ENCODE measurements at regions of chr10 and their contacts with region 1.

Region 1: DNA sequence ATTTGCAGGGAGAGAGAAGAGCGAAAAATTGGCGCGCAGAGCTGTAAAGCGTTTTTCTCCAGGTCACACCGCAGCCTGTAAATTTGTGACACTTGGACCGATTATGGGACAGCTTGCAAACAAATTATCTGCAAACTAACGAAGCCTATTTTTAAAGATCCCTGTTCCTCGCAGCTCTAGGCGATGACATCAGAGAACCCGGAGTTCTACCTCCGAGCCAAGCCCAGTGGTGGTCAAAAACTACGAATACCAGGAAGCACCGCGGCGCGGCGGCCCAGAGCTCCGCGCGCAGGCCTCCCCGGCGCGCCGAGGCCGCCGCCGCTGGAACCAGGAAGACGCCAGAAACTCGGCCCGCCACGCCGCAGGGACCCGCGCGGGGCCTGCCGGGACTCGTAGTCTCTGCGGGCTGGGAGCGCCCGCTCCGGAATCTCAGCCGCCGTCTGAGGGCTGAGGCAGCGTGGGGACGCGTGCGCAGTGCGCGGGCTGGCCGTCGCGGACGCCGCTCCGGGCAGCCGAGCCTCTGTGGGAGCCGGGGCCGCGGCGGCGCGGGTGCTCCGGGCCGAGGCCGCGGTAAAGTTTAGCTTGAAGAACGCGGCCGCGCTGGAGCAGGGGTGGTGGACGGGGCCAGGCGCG is at the start of gene PLEKHA1:
- DNase-seq: peak; percentile 92 to 94 (median 93)
- H3K4me3 ChIP-seq: peak within 1 kb of the TSS; percentile 64 to 89
- H3K4me3 Mint-ChIP-seq: peak within 1 kb of the TSS; percentile 89 to 97 (median 96)
- H3K27ac ChIP-seq: peak within 1 kb of the TSS; percentile 94
- H3K27ac Mint-ChIP-seq: peak within 1 kb of the TSS; percentile 89 to 98 (median 96)
- H3K4me1 ChIP-seq: peaks cover 39% of the 10 kb centered on the region
- H3K4me1 Mint-ChIP-seq: peaks cover 23 to 51% (median 35%) of the 10 kb centered on the region in 4 donors
- H3K27me3 ChIP-seq: peaks cover 4% of the 10 kb centered on the region
- H3K27me3 Mint-ChIP-seq: peaks cover 7 to 11% of the 10 kb centered on the region in 2 donors
- total RNA-seq, gene PLEKHA1: 62.9 to 69.7 TPM

Region 2: DNA sequence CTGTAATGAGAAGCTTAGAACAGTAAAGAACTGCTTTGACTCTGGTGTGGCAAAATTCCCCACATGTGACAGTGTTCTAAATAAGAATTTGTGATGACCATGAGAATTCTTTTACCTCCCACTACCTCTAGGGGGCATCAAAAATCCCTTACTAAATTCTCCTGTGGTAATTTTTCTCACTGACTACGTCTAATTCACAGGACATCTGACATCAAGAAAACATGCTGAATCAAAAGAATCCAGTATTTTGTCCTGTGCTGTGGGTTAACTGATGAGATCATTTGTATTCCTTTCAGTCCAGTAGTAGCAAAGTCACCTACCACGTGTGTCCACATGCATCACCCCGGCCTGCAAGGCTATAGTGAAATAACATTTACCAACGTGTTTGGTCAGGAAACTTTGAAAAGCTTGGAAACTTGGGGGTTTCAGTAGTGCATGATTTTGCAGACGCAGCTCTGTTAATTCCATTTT is 550.3 kb before region 1 on chr10:
- CTCF ChIA-PET with region 1: no interaction called
- POLR2A ChIA-PET with region 1: no interaction called
- intact Hi-C with region 1: no loop called
- DNase-seq: peak in 3 of 5 donors; percentile 8 to 15 (median 10)
- H3K4me3 ChIP-seq: no peak overlapping the region
- H3K4me3 Mint-ChIP-seq: no peak overlapping the region
- H3K27ac ChIP-seq: no peak overlapping the region
- H3K27ac Mint-ChIP-seq: no peak overlapping the region
- H3K4me1 ChIP-seq: no peaks in the 10 kb centered on the region
- H3K4me1 Mint-ChIP-seq: peaks cover 0 to 5% (median 1%) of the 10 kb centered on the region in 4 donors
- H3K27me3 ChIP-seq: no peaks in the 10 kb centered on the region
- H3K27me3 Mint-ChIP-seq: no peaks in the 10 kb centered on the region

Region 3: GRCh38 chr10:122342293-122343134 is 31.8 kb before region 1 on chr10:
- CTCF ChIA-PET with region 1: interaction called, 19 read pairs
- POLR2A ChIA-PET with region 1: no interaction called
- intact Hi-C with region 1: no loop called
- DNase-seq: peak; percentile 58 to 68 (median 65)
- H3K4me3 ChIP-seq: no peak overlapping the region
- H3K4me3 Mint-ChIP-seq: no peak overlapping the region
- H3K27ac ChIP-seq: no peak overlapping the region
- H3K27ac Mint-ChIP-seq: peak overlapping the region in 2 of 7 donors; percentile 50 to 75
- H3K4me1 ChIP-seq: no peaks in the 10 kb centered on the region
- H3K4me1 Mint-ChIP-seq: peaks cover 3 to 9% (median 6%) of the 10 kb centered on the region in 4 donors
- H3K27me3 ChIP-seq: no peaks in the 10 kb centered on the region
- H3K27me3 Mint-ChIP-seq: peaks cover 0 to 1% of the 10 kb centered on the region in 2 donors

Region 4: DNA sequence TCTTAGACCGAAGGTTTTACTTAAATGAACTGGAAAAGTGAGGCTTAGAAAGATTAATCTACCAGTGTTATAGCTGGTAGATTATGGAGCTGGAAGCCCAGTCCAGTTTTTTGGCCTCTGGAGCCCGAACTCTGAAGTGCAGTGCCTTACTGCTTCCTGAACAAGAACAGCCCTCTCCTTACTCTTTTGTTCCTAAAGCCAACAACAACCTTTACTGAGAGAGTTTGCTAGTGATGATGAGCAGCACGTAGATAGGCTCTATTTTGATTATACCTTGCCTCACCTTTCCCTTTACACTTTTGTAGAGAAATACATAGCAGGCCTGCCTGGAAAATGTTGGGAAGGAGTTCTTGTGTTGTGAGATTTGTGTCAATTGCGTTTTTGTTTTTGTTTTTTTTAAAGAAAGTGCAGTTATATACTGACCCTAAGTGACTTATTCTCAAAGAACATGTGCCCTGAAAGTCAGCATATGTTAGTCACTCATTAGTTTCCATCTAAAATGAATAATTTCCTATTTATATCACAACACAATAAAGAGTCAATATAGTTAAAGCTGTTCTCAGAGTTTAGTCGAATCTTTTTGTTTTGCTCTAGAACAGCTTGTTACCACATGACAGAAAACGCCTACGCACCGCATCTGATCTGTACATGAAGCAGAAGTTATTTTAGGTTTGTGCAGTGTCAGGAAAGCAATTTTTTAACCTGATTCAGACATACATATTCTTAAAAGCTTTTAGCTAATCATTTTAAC is 33.2 kb after region 1 on chr10:
- CTCF ChIA-PET with region 1: interaction called, 3 read pairs
- POLR2A ChIA-PET with region 1: interaction called, 12 read pairs
- intact Hi-C with region 1: loop called (anchors 1 kb)
- DNase-seq: peak; percentile 25 to 79 (median 46)
- H3K4me3 ChIP-seq: no peak overlapping the region
- H3K4me3 Mint-ChIP-seq: peak overlapping the region; percentile 43 to 74 (median 60)
- H3K27ac ChIP-seq: no peak overlapping the region
- H3K27ac Mint-ChIP-seq: peak overlapping the region; percentile 84 to 96 (median 86)
- H3K4me1 ChIP-seq: peaks cover 52% of the 10 kb centered on the region
- H3K4me1 Mint-ChIP-seq: peaks cover 25 to 50% (median 40%) of the 10 kb centered on the region in 4 donors
- H3K27me3 ChIP-seq: no peaks in the 10 kb centered on the region
- H3K27me3 Mint-ChIP-seq: no peaks in the 10 kb centered on the region

Region 5: GRCh38 chr10:122435212-122435827 is 61.0 kb after region 1 on chr10:
- CTCF ChIA-PET with region 1: interaction called, 31 read pairs
- POLR2A ChIA-PET with region 1: interaction called, 10 read pairs
- intact Hi-C with region 1: loop called (anchors 1 kb)
- DNase-seq: peak in 4 of 5 donors; percentile 54 to 62 (median 60)
- H3K4me3 ChIP-seq: no peak overlapping the region
- H3K4me3 Mint-ChIP-seq: no peak overlapping the region
- H3K27ac ChIP-seq: no peak overlapping the region
- H3K27ac Mint-ChIP-seq: no peak overlapping the region
- H3K4me1 ChIP-seq: no peaks in the 10 kb centered on the region
- H3K4me1 Mint-ChIP-seq: peaks cover 0 to 6% (median under 1%) of the 10 kb centered on the region in 4 donors
- H3K27me3 ChIP-seq: no peaks in the 10 kb centered on the region
- H3K27me3 Mint-ChIP-seq: no peaks in the 10 kb centered on the region

Region 6: GRCh38 chr10:122953827-122954730 is 579.7 kb after region 1 on chr10 and contains the start of gene C10orf88:
- CTCF ChIA-PET with region 1: no interaction called
- POLR2A ChIA-PET with region 1: interaction called, 8 read pairs
- intact Hi-C with region 1: loop called (anchors 10 kb)
- DNase-seq: peak; percentile 95 to 98 (median 98)
- H3K4me3 ChIP-seq: peak within 1 kb of the TSS; percentile 47 to 73
- H3K4me3 Mint-ChIP-seq: peak within 1 kb of the TSS; percentile 90 to 97 (median 92)
- H3K27ac ChIP-seq: peak within 1 kb of the TSS; percentile 57
- H3K27ac Mint-ChIP-seq: peak within 1 kb of the TSS; percentile 87 to 98 (median 93)
- H3K4me1 ChIP-seq: peaks cover 27% of the 10 kb centered on the region
- H3K4me1 Mint-ChIP-seq: peaks cover 17 to 43% (median 33%) of the 10 kb centered on the region in 4 donors
- H3K27me3 ChIP-seq: no peaks in the 10 kb centered on the region
- H3K27me3 Mint-ChIP-seq: peaks cover 0 to 2% of the 10 kb centered on the region in 2 donors
- total RNA-seq, gene C10orf88: 10.5 to 12.3 TPM

Region 7: DNA sequence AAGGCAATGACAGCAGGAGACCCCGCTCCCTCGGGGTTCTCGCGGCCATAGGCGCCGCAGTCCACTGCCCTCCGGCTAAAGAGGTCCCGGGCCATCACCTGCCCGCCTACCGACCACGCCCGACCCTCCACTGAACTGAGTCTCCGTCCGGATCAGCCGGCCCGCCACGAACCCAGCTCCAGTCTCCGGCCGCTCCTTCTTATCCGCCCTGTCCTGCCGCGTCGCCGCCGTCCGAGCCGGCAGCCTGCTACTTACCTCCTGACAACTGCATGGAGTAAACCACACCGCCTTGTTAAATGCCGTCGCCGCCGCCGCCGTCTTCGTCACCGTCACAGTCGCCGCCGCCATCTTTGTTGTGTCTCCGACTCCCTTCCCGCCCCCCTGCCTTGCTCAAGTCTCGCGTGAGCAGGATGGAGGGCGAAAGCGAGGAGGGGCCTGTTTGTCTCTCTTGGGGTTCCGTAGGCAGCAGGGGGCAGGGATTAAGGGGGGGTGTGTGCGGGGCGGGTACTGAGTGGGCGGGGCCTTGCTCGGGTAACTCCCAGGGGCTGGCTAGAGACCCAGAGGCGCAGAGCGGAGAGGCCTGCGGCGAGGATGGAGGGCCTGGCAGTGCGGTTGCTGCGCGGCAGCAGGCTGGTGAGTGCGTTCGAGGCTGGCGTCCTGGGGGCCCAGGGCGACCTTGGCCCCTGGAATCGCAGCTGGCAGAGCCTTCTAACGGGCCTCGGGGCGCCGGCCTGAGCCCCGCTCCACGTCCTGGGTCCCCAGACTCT is 634.3 kb after region 1 on chr10 and contains the starts of genes ACADSB and IKZF5:
- CTCF ChIA-PET with region 1: no interaction called
- POLR2A ChIA-PET with region 1: interaction called, 3 read pairs
- intact Hi-C with region 1: loop called (anchors 1 kb)
- DNase-seq: peak; percentile 95 to 99 (median 97)
- H3K4me3 ChIP-seq: peak within 1 kb of the TSS; percentile 68 to 87
- H3K4me3 Mint-ChIP-seq: peak within 1 kb of the TSS; percentile 96 to 100 (median 99)
- H3K27ac ChIP-seq: peak within 1 kb of the TSS; percentile 91
- H3K27ac Mint-ChIP-seq: peak within 1 kb of the TSS; percentile 92 to 100 (median 99)
- H3K4me1 ChIP-seq: peaks cover 57% of the 10 kb centered on the region
- H3K4me1 Mint-ChIP-seq: peaks cover 41 to 72% (median 55%) of the 10 kb centered on the region in 4 donors
- H3K27me3 ChIP-seq: no peaks in the 10 kb centered on the region
- H3K27me3 Mint-ChIP-seq: no peaks in the 10 kb centered on the region
- total RNA-seq, gene ACADSB: 35.7 to 36.4 TPM
- total RNA-seq, gene IKZF5: 37.4 to 45.9 TPM

Measured in CD4-positive, alpha-beta memory T cell (primary cell).